ENCODE measurements at regions of chr2 and their contacts with region 1.

Region 1: DNA sequence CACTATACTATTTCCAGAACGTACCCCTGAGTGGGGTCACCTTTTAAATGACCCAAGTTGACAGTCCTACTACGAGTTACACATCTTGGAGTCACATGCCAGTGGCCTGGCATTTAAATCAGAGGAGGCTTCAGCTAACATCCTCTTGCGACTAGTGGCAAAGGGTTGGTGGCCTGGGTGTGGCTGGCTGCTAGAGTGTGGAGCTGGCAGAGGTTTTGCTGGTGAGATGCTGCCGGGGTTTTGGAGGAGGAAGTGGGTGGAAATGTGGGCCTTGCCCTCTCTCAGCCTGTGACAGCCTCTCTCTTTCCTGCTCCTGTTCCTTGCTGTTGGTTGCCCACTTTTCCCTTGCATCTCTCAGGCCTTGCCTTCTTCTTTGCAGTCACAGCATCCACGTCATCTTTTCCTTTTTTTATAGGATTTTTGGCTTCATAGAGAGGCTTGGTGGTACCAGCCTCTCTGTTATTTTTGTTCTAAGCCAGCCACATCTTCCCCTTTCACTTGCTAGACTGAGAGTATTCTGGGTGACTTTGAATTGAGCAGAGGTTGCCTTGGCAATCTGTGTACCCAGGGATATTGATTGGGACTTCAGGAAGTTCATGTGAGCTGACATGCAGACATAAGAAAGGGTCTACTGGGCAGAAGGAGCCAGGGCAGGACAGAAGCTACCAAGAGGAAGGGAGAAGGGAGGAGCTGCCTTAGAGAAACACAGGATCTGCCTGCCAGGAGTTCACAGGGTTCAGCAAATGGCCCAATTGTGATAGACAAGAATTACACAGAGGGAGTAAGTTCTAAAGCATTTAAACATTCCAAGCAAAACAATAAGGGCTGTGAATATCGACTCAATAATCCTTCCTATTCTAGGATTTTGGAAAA is 55.4 kb downstream of the CDC42EP3 start:
- DNase-seq: peak in 8 of 9 donors; percentile 39 to 78 (median 70)
- ATAC-seq: peak; percentile 92
- H3K4me3 ChIP-seq: no peak overlapping the region
- H3K4me3 Mint-ChIP-seq: peak overlapping the region; percentile 10 to 70 (median 40)
- H3K27ac ChIP-seq: peak overlapping the region; percentile 49
- H3K27ac Mint-ChIP-seq: peak overlapping the region; percentile 82 to 96 (median 92)
- H3K4me1 ChIP-seq: peaks cover 22 to 47% of the 10 kb centered on the region in 2 donors
- H3K4me1 Mint-ChIP-seq: peaks cover 28 to 36% (median 30%) of the 10 kb centered on the region in 7 donors
- H3K27me3 ChIP-seq: no peaks in the 10 kb centered on the region
- H3K27me3 Mint-ChIP-seq: no peaks in the 10 kb centered on the region

Region 2: DNA sequence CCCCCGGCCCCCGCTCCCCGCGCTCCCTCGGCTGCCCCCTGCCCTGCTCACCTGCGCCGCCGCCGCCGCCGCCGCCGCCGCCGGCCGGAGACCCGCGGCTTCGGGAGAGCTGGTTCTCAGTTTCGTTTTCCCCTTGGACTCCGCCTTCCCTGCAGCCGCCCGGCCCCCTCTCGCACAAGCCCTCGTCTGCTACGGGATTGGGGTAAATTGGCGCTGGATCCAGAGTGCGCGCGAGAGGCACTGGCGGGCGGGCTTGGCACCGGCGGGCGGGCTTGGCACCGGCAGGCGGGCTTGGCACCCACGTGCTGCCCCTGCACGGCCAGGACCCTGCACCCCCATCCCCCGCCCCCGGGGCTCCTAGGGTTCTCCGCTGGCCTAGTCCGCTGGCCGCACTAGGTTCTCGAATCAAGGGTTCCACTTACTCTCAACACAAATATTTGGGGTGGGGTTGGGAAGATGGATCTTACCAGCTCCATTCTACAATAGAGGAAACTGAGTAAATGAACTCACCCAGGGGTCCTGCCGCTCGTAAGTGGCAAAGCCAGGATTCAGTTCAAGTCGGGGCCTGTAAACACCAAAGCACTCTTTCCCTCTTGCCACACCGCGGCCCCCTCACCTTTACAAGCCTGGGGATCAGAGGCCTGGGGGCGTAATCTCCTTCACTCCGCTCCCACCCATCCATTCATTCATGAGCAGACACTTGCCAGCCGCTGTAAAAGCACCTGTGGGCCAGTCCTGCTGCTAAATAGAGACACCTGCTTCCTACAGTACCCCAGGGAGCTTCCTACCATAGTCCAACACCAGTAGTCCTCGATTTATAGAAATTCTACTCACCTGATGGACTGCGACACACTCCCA is 459.0 kb before region 1 on chr2 and contains the start of gene EIF2AK2:
- CTCF ChIA-PET with region 1: no interaction called
- POLR2A ChIA-PET with region 1: no interaction called
- intact Hi-C with region 1: no loop called
- DNase-seq: peak; percentile 59 to 85 (median 80)
- ATAC-seq: peak; percentile 96
- H3K4me3 ChIP-seq: peak within 1 kb of the TSS; percentile 92
- H3K4me3 Mint-ChIP-seq: peak within 1 kb of the TSS; percentile 88 to 99 (median 94)
- H3K27ac ChIP-seq: peak within 1 kb of the TSS; percentile 81
- H3K27ac Mint-ChIP-seq: peak within 1 kb of the TSS; percentile 86 to 96 (median 92)
- H3K4me1 ChIP-seq: peaks cover 18 to 25% of the 10 kb centered on the region in 2 donors
- H3K4me1 Mint-ChIP-seq: peaks cover 29 to 57% (median 48%) of the 10 kb centered on the region in 7 donors
- H3K27me3 ChIP-seq: no peaks in the 10 kb centered on the region
- H3K27me3 Mint-ChIP-seq: peaks cover 0 to 4% (median 0%) of the 10 kb centered on the region in 5 donors
- total RNA-seq, gene EIF2AK2: 21.2 to 91.9 (median 24.2) TPM

Region 3: GRCh38 chr2:37600735-37601134 is 15.3 kb before region 1 on chr2:
- CTCF ChIA-PET with region 1: interaction called, 5 read pairs
- POLR2A ChIA-PET with region 1: interaction called, 16 read pairs
- intact Hi-C with region 1: loop called in 1 of 2 experiments (anchors 2 kb)
- DNase-seq: no peak
- ATAC-seq: peak; percentile 28
- H3K4me3 ChIP-seq: peak overlapping the region; percentile 58
- H3K4me3 Mint-ChIP-seq: peak overlapping the region in 9 of 10 donors; percentile 35 to 84 (median 80)
- H3K27ac ChIP-seq: no peak overlapping the region
- H3K27ac Mint-ChIP-seq: peak overlapping the region in 6 of 9 donors; percentile 38 to 95 (median 90)
- H3K4me1 ChIP-seq: peaks cover 30 to 35% of the 10 kb centered on the region in 2 donors
- H3K4me1 Mint-ChIP-seq: peaks cover 35 to 53% (median 46%) of the 10 kb centered on the region in 7 donors
- H3K27me3 ChIP-seq: no peaks in the 10 kb centered on the region
- H3K27me3 Mint-ChIP-seq: peaks cover 0 to 13% (median 0%) of the 10 kb centered on the region in 5 donors

Region 4: DNA sequence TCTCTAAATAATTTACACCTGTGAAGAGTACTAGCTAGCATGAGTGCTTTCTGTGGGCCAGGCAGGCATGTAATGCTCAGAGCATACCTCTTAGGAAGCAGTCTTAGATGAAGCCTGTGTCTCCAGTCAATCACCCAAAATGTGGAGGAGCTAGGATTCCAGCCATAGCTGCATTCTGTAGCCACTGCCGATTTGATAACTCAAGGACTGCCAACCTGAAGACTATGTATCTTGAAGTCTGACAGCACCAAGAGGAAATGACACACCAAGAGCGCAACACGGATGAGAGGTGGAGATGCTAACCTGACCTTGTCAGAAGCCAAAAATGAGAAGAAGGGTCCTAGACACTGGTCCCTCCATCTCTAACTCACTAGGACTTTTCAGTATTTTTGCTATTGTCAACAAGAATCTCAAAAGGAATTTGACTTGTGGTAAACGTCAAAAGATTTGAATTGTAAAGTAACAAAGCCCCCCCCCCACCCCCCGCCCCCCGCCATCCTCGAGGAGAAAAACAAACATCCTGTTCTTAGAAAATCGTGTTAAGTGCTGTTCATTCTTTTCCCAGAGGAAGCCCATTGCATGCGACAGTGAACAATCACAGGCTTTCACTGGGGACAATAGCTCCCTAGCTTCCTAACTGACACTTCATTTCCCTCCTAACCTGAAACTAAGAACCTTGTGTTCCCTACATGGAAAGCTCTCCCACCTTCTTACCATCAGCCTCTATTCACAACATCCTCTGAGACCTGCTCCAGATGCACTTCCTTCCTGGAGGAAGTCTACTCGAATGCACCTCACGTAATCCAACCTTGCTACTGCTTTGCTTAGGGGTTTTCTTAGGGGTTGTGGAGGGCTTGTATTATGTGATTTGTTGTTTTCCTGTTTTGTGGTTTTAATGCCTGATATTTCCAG is 40.7 kb after region 1 on chr2:
- CTCF ChIA-PET with region 1: no interaction called
- POLR2A ChIA-PET with region 1: no interaction called
- intact Hi-C with region 1: no loop called
- DNase-seq: peak in 1 of 9 donors; percentile 35
- ATAC-seq: peak; percentile 43
- H3K4me3 ChIP-seq: no peak overlapping the region
- H3K4me3 Mint-ChIP-seq: peak overlapping the region; percentile 23 to 78 (median 58)
- H3K27ac ChIP-seq: no peak overlapping the region
- H3K27ac Mint-ChIP-seq: peak overlapping the region; percentile 14 to 92 (median 68)
- H3K4me1 ChIP-seq: peaks cover 44 to 77% of the 10 kb centered on the region in 2 donors
- H3K4me1 Mint-ChIP-seq: peaks cover 58 to 97% (median 88%) of the 10 kb centered on the region in 7 donors
- H3K27me3 ChIP-seq: no peaks in the 10 kb centered on the region
- H3K27me3 Mint-ChIP-seq: no peaks in the 10 kb centered on the region

Measured in naive thymus-derived CD4-positive, alpha-beta T cell (primary cell).